H1 (cell line): ENCODE measurements at regions of chr12 and their contacts with region 1.

Region 1: DNA sequence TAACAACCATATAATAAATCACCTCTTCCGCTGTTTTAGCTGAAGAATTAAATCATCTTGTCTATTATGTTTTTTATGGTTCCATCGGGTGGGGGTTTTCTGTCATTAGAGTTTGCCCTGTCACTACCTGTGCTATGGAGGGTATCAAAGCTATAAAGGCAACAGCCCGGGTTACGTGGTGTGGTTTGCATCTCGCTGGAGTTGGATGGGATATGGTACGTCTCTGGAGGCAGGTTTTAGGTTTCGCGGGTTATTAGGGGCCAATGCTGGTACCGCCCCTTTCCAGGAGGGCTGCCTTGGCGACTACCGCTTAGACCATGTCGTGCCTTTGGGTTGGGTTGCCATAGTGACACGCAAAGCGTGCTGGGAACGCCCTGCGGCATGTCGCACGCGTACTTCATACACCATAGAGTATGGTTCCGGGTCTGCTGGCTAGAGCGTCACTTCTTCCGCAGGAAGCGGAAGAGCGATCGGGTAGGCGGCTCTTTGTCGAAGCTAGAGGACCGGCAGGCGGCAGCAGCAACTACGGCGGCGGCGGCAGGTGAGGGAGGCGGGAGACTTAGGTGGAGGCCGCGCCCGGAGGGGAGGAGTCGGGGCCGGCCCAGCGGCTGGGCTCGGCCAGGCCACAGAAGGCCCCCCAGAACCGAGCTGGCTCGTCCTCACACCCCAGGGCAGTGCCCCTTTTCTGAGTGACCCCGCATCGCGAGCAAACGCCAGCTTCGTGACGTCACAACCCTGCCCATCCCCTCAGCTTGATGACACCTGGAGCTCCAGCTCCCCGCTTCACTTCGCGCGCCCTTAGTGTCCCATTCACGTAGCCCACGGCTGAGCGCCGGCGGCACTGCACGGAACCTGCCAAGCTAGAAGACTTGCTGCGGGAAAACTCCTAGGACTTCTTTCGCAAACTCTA is at the start of gene ZC3H10:
- DNase-seq: peak; percentile 96 to 100
- H3K4me3 ChIP-seq: peak within 1 kb of the TSS; percentile 85 to 99 (median 96)
- H3K27ac ChIP-seq: peak within 1 kb of the TSS; percentile 97
- H3K4me1 ChIP-seq: peaks cover 0 to 9% (median 5%) of the 10 kb centered on the region in 4 experiments; a peak in 5 of 7 replicates
- H3K27me3 ChIP-seq: no peaks in the 10 kb centered on the region
- CTCF ChIP-seq: peak; percentile 28 to 53 (median 41)
- EP300 ChIP-seq: peak; percentile 2 to 64; a peak in 2 of 3 replicates
- POLR2A ChIP-seq: peak; percentile 98 to 100
- RAD21 ChIP-seq: peak in 1 of 2 experiments; percentile 10; a peak in 1 of 4 replicates
- total RNA-seq, gene ZC3H10: 11.2 and 12.5 TPM in 2 replicates

Region 2: DNA sequence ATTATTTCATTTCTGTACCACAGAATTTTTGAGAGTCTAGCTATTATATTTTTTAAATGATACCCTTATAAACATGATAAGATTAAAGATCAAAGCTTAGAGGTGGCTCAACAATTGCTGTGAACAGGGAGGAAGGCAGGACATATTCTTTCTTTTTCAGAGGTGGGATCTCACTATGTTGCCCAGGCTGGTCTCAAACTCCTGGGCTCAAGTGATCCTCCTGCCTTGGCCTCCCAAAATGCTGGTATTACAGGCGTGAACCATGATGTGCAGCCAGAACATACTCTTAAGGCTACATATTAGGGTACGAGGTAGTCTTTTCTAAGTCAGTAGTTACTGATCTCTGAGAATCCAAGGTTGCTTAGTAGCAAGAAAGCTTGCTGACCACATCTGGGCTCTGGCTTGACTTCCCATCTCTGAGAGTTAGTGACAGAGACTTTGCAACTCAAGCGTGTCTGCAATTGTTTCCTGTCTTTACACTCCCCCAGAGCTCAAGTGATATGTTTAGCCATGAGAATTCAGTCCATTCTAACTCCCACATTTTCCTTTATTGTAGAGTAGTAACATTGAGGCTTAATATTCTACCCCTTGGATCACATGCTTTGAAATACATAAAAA is 135.6 kb before region 1 on chr12:
- CTCF ChIA-PET with region 1: no interaction called
- POLR2A ChIA-PET with region 1: no interaction called
- DNase-seq: no peak
- H3K4me3 ChIP-seq: no peak overlapping the region
- H3K27ac ChIP-seq: no peak overlapping the region
- H3K4me1 ChIP-seq: no peaks in the 10 kb centered on the region
- H3K27me3 ChIP-seq: no peaks in the 10 kb centered on the region
- CTCF ChIP-seq: no peak
- EP300 ChIP-seq: no peak
- POLR2A ChIP-seq: no peak
- RAD21 ChIP-seq: no peak

Region 3: GRCh38 chr12:56078990-56079664 is 38.9 kb before region 1 on chr12:
- CTCF ChIA-PET with region 1: interaction called, 5 read pairs
- POLR2A ChIA-PET with region 1: interaction called, 66 read pairs
- DNase-seq: peak; percentile 82 to 98
- H3K4me3 ChIP-seq: peak overlapping the region; percentile 74 to 89 (median 80)
- H3K27ac ChIP-seq: peak overlapping the region; percentile 92
- H3K4me1 ChIP-seq: peaks cover 3 to 17% (median 11%) of the 10 kb centered on the region in 4 experiments
- H3K27me3 ChIP-seq: no peaks in the 10 kb centered on the region
- CTCF ChIP-seq: peak; percentile 73 to 81 (median 78)
- EP300 ChIP-seq: 0 out of 3 replicates have a peak, but pooled peaks of 1 of the 2 experiments have one; percentile 38
- POLR2A ChIP-seq: peak in 1 of 2 experiments; percentile 84; a peak in 2 of 3 replicates
- RAD21 ChIP-seq: peak; percentile 35 to 51; a peak in 3 of 4 replicates

Region 4: GRCh38 chr12:56127888-56128669 is 10.0 kb after region 1 on chr12 and contains the start of gene ESYT1:
- CTCF ChIA-PET with region 1: interaction called, 46 read pairs
- POLR2A ChIA-PET with region 1: interaction called, 161 read pairs
- DNase-seq: peak; percentile 97 to 100
- H3K4me3 ChIP-seq: peak within 1 kb of the TSS; percentile 79 to 95 (median 90)
- H3K27ac ChIP-seq: peak within 1 kb of the TSS; percentile 88
- H3K4me1 ChIP-seq: peaks cover 0 to 13% (median 5%) of the 10 kb centered on the region in 4 experiments; a peak in 5 of 7 replicates
- H3K27me3 ChIP-seq: no peaks in the 10 kb centered on the region
- CTCF ChIP-seq: no peak
- EP300 ChIP-seq: peak in 1 of 2 experiments; percentile 57; a peak in 1 of 3 replicates
- POLR2A ChIP-seq: peak; percentile 93 to 96
- RAD21 ChIP-seq: no peak; a peak in 1 of 4 replicates
- total RNA-seq, gene ESYT1: 85.1 and 86.9 TPM in 2 replicates

Region 5: GRCh38 chr12:56158029-56158925 is 40.2 kb after region 1 on chr12 and contains the start of gene MYL6:
- CTCF ChIA-PET with region 1: interaction called, 47 read pairs
- POLR2A ChIA-PET with region 1: no interaction called
- DNase-seq: peak; percentile 88 to 91
- H3K4me3 ChIP-seq: peak within 1 kb of the TSS; percentile 63 to 97 (median 93)
- H3K27ac ChIP-seq: peak within 1 kb of the TSS; percentile 99
- H3K4me1 ChIP-seq: peaks cover 8 to 37% (median 22%) of the 10 kb centered on the region in 4 experiments
- H3K27me3 ChIP-seq: no peaks in the 10 kb centered on the region
- CTCF ChIP-seq: no peak
- EP300 ChIP-seq: peak in 1 of 2 experiments; percentile 75; a peak in 2 of 3 replicates
- POLR2A ChIP-seq: peak; percentile 98
- RAD21 ChIP-seq: no peak
- total RNA-seq, gene MYL6: 1,130 and 1,137 TPM in 2 replicates

Region 6: DNA sequence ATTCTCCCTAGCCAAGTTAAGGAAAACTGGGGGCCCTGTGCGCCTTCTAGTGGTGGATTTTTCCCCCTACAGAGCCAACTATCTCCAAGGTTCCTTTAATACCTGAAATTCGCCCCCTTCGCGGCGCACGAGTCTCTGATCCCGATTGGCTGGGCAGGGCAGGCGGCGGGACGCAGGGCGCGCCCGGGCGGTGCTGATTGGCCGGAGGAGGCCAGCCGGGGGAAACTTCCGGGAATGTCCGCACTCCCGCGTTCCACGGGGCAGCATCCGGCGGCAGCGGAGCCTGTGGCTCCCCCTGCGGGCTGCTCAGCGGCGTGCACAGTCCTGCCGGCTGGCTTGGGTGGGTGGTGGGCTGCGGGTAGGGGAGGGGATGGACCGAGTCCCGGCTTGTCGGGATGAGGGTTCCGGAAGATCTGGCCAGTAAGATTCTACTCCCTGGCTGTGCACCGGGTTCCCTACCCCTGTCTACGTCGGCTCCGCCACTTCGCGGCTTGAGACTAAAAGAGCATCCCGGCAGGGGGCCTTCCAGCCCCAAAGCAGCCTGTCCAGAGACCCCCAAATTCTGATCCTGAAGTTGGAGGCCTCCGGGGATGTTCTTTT is 106.2 kb after region 1 on chr12 and contains the start of gene NABP2:
- CTCF ChIA-PET with region 1: interaction called, 22 read pairs
- POLR2A ChIA-PET with region 1: interaction called, 42 read pairs
- DNase-seq: peak; percentile 95 to 98
- H3K4me3 ChIP-seq: peak within 1 kb of the TSS; percentile 49 to 78 (median 66)
- H3K27ac ChIP-seq: peak within 1 kb of the TSS; percentile 59; the same call in 1 of the 2 replicates
- H3K4me1 ChIP-seq: peaks cover 3 to 13% (median 6%) of the 10 kb centered on the region in 4 experiments; a peak in 6 of 7 replicates
- H3K27me3 ChIP-seq: no peaks in the 10 kb centered on the region
- CTCF ChIP-seq: peak; percentile 70 to 79 (median 78)
- EP300 ChIP-seq: no peak
- POLR2A ChIP-seq: no peak
- RAD21 ChIP-seq: peak; percentile 39
- total RNA-seq, gene NABP2: 56.1 and 58.1 TPM in 2 replicates